ENCODE measurements at regions of chr5 and their contacts with region 1.

Region 1: GRCh38 chr5:40410231-40410861 is 269.4 kb upstream of the PTGER4 start:
- DNase-seq: peak; percentile 82
- H3K4me3 Mint-ChIP-seq: peak overlapping the region; percentile 62
- H3K27ac Mint-ChIP-seq: peak overlapping the region; percentile 99
- H3K4me1 Mint-ChIP-seq: peaks cover 64% of the 10 kb centered on the region
- H3K27me3 Mint-ChIP-seq: no peaks in the 10 kb centered on the region

Region 2: DNA sequence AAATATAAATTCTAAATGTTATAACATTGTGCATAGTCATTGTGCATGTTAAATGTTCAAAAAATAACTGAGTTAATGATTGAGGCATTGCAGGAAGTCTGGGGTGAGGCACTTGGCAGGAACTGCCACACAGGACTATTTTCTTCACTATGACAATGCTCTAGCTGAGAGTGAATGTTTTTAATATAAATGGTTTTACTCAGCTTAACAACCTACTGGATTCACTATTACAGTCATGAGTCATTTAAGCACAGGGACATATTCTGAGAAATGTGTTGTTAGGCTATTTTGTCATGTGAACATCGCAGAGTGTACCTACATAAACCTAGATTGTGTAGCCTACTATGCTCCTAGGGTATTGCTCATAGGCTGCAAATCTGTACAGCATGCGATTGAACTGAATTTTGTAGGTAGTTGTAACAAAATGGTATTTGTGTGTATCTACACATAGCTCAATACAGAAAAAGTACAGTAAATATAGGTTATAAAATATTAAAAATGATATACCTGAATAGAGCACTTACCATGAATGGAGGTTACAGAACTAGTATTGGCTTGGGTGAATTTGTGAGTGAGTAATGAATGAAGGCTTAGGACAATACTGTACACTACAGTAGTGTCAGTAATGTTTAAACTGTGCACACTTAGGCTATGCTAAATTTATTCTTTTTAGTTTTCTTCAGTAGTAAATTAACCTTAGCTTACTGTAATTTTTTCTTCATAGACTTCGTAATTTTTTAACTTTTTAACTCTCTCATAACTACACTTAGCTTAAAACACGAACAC is 76.7 kb before region 1 on chr5:
- CTCF ChIA-PET with region 1: no interaction called
- POLR2A ChIA-PET with region 1: interaction called, 12 read pairs
- intact Hi-C with region 1: loop called (anchors 1 kb)
- DNase-seq: peak; percentile 56
- H3K4me3 Mint-ChIP-seq: no peak overlapping the region
- H3K27ac Mint-ChIP-seq: peak overlapping the region; percentile 33
- H3K4me1 Mint-ChIP-seq: peaks cover 50% of the 10 kb centered on the region
- H3K27me3 Mint-ChIP-seq: no peaks in the 10 kb centered on the region

Region 3: GRCh38 chr5:40428126-40428525 is 17.8 kb after region 1 on chr5:
- CTCF ChIA-PET with region 1: interaction called, 3 read pairs
- POLR2A ChIA-PET with region 1: interaction called, 8 read pairs
- intact Hi-C with region 1: loop called (anchors 1 kb)
- DNase-seq: peak; percentile 50
- H3K4me3 Mint-ChIP-seq: no peak overlapping the region
- H3K27ac Mint-ChIP-seq: no peak overlapping the region
- H3K4me1 Mint-ChIP-seq: peaks cover 34% of the 10 kb centered on the region
- H3K27me3 Mint-ChIP-seq: no peaks in the 10 kb centered on the region

Region 4: DNA sequence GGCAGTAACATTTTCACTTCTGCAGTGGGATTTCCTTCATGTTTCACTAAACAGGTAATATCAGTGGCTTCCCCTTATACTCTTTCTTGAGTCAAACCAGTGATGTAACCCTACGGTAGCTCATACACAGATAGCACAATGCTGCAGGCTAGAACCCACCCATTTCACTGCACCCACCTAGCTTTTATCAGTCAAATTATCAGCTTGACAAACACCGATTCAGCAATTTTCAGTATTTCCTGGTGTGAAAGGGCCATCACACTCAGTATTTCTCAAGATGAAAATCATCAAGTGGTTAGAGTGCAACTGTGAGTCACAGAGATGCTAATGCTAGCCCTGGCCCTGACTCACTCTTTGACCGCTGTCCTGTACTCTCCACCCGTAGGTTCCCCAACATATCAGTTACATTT is 27.1 kb after region 1 on chr5:
- CTCF ChIA-PET with region 1: interaction called, 12 read pairs
- POLR2A ChIA-PET with region 1: interaction called, 27 read pairs
- intact Hi-C with region 1: loop called (anchors 1 kb)
- DNase-seq: peak; percentile 58
- H3K4me3 Mint-ChIP-seq: no peak overlapping the region
- H3K27ac Mint-ChIP-seq: peak overlapping the region; percentile 70
- H3K4me1 Mint-ChIP-seq: peaks cover 74% of the 10 kb centered on the region
- H3K27me3 Mint-ChIP-seq: no peaks in the 10 kb centered on the region

Region 5: GRCh38 chr5:40480392-40480791 is 70.0 kb after region 1 on chr5:
- CTCF ChIA-PET with region 1: interaction called, 6 read pairs
- POLR2A ChIA-PET with region 1: interaction called, 17 read pairs
- intact Hi-C with region 1: loop called (anchors 1 kb)
- DNase-seq: peak; percentile 74
- H3K4me3 Mint-ChIP-seq: peak overlapping the region; percentile 42
- H3K27ac Mint-ChIP-seq: peak overlapping the region; percentile 85
- H3K4me1 Mint-ChIP-seq: peaks cover 53% of the 10 kb centered on the region
- H3K27me3 Mint-ChIP-seq: no peaks in the 10 kb centered on the region

Region 6: DNA sequence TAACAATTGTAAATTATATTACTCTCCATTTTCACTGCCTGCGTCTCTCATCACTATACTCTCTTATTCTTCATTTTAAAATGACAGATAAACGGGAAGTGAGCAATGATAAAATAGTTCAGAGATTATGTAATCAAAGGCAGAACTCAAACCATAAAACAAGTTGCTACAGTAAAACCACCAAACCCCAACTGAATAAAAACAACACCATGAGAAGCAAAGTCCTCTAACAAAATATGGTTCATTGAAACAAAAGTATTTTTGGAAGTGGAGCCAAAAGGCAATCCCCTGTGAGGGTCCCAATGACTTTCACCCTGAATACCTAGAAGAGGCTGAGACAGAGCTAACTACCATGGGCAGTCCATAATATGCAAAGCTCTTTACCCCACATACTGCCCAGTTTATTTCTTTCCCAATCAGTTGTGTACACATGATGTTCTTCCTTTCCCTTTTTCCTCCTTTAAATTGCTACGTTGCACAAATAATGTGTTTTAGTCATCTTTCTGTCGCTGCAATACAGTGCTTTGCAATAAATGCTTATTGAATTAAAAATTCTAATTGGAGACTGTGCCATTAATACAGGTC is 205.3 kb after region 1 on chr5:
- CTCF ChIA-PET with region 1: no interaction called
- POLR2A ChIA-PET with region 1: no interaction called
- intact Hi-C with region 1: no loop called
- DNase-seq: no peak
- H3K4me3 Mint-ChIP-seq: no peak overlapping the region
- H3K27ac Mint-ChIP-seq: no peak overlapping the region
- H3K4me1 Mint-ChIP-seq: peaks cover 19% of the 10 kb centered on the region
- H3K27me3 Mint-ChIP-seq: no peaks in the 10 kb centered on the region

Region 7: DNA sequence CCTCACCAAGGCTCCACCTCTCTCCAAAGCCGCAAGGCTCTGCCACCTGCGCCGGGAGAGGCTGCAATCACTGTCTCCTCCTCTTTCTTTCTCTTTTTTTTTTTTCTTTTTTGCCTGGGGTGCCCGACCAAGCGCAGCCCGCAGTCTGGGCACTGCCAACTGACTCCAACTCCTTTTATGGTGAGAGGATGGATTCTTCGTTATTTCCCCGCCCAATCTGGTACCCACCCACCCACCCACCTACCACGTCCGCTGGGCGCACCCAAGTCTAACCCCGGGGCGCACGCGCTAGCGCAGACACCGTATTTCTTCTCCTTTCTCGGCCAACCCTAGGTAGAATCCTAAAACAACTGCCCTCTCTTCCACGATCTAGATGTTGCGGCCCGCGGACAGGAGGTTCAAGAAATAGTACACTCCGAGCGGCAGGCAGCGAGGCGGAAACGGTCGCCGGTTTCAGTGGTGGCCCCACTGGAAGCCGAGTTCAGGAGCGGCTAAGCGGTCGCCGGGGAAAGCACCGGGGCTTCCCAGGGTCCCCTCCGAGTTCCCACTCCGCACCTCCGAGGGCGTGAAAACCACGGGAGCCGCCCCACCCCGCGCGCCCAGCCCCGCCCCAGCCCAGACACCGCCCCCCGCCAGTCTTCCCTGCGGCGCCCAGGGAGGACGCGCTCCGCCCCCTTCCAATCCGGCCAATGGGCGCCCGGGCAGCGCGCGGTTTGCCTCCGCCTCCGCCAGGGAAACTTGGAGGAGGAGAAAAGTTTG is 269.0 kb after region 1 on chr5:
- CTCF ChIA-PET with region 1: interaction called, 5 read pairs
- POLR2A ChIA-PET with region 1: interaction called, 26 read pairs
- intact Hi-C with region 1: loop called (anchors 1 kb)
- DNase-seq: peak; percentile 96
- H3K4me3 Mint-ChIP-seq: peak overlapping the region; percentile 93
- H3K27ac Mint-ChIP-seq: peak overlapping the region; percentile 97
- H3K4me1 Mint-ChIP-seq: peaks cover 37% of the 10 kb centered on the region
- H3K27me3 Mint-ChIP-seq: no peaks in the 10 kb centered on the region